ENCODE measurements at regions of chr3 and their contacts with region 1.

Region 1: DNA sequence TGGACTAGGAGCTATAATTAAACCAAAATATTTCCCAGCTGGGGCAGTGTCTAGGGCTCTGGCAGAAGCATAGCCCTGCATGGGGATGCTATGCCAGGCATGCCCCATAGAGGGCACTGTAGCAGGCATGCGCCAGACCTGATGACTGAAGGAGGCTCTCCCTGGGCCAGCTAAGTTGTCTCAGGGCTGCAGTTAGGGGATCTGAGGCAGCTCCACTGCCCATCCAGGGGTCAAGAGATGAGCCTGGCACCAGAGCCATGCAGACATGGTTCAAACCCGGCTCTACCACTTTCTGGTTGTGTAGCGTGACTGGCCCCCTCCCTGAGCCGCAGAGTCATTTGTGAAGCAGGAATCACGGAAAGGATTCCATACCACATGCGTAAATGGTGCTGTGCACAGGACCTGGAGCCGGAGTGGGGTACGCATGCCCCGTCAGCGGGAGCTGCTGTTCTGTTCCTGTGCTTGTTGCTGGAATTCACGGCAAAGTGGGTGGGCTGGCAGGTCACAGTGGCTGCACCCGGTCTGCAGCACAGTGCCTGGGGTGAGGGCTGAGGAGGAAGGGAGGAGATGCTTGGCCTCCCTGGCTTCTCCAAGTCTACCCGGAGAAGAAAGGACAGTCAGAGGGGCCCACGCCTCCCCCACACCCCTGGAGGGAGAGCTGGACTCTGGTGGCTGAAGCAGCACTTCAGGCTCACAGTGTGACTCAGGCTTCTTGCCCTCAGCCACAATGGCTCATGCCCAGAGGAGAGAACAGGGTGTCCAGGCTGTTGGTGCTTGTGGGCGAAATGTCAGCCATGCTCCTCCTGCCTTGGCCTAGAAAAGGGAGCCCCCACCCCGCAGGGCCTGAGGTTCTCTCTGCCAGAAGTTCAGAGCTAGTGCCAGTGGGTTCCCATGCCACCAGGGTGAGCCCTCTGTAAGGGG is 43.1 kb downstream of the DNASE1L3 start:
- DNase-seq: peak; percentile 79
- H3K4me3 Mint-ChIP-seq: no peak overlapping the region
- H3K27ac Mint-ChIP-seq: no peak overlapping the region
- H3K4me1 Mint-ChIP-seq: no peaks in the 10 kb centered on the region
- H3K27me3 Mint-ChIP-seq: no peaks in the 10 kb centered on the region

Region 2: DNA sequence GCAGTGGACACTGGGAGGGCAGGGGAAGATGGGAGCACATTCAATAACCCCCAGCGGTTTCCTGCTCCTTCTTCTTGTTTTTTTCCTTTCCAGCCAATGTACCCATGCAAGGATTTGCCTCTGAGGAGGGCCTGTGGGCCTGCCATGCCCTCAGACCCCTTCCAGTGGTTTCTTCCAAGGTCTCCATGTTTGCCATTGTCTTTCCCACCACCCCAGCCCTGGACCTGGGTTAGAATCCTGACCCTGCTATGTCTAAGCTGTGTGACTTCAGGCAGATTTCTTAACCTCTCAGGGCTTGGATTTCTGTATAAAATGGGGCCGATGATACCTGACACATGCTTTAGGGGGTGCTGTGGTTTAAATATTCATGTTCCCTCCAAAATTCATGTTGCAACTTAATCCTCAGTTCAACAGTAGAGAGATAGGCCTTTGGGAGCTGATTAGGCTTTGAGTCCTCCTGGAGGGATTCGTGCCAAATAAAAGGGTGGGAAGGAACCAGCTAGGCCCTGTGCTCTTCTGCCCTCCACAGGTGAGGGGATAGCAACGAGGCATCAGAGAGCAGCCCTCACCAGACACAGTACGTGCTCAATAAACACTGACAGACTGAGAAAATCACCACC is 205.8 kb before region 1 on chr3:
- CTCF ChIA-PET with region 1: interaction called, 14 read pairs
- intact Hi-C with region 1: no loop called
- DNase-seq: no peak
- H3K4me3 Mint-ChIP-seq: no peak overlapping the region
- H3K27ac Mint-ChIP-seq: no peak overlapping the region
- H3K4me1 Mint-ChIP-seq: peaks cover 7% of the 10 kb centered on the region
- H3K27me3 Mint-ChIP-seq: no peaks in the 10 kb centered on the region

Region 3: GRCh38 chr3:58041654-58042324 is 125.9 kb before region 1 on chr3:
- CTCF ChIA-PET with region 1: no interaction called
- intact Hi-C with region 1: no loop called
- DNase-seq: no peak
- H3K4me3 Mint-ChIP-seq: no peak overlapping the region
- H3K27ac Mint-ChIP-seq: no peak overlapping the region
- H3K4me1 Mint-ChIP-seq: peaks cover 79% of the 10 kb centered on the region
- H3K27me3 Mint-ChIP-seq: no peaks in the 10 kb centered on the region

Region 4: GRCh38 chr3:58135712-58136543 is 31.8 kb before region 1 on chr3:
- CTCF ChIA-PET with region 1: interaction called, 14 read pairs
- intact Hi-C with region 1: no loop called
- DNase-seq: no peak
- H3K4me3 Mint-ChIP-seq: no peak overlapping the region
- H3K27ac Mint-ChIP-seq: no peak overlapping the region
- H3K4me1 Mint-ChIP-seq: no peaks in the 10 kb centered on the region
- H3K27me3 Mint-ChIP-seq: no peaks in the 10 kb centered on the region

Region 5: GRCh38 chr3:58177747-58178527 is 10.2 kb after region 1 on chr3:
- CTCF ChIA-PET with region 1: interaction called, 46 read pairs
- intact Hi-C with region 1: no loop called
- DNase-seq: peak; percentile 95
- H3K4me3 Mint-ChIP-seq: peak overlapping the region; percentile 59
- H3K27ac Mint-ChIP-seq: no peak overlapping the region
- H3K4me1 Mint-ChIP-seq: peaks cover 13% of the 10 kb centered on the region
- H3K27me3 Mint-ChIP-seq: peaks cover 6% of the 10 kb centered on the region

Measured in activated naive CD4-positive, alpha-beta T cell treated with anti-CD3 and anti-CD28 coated beads for 36 hours (primary cell).